GM13976 (cell line): ENCODE measurements at regions of chr11 and their contacts with region 1.

Region 1: GRCh38 chr11:64894070-64894796 is 15.8 kb upstream of the EHD1 start:
- DNase-seq: peak; percentile 94
- CTCF ChIP-seq: peak; percentile 97

Region 2: GRCh38 chr11:64396079-64396591 is 498.1 kb before region 1 on chr11:
- in situ Hi-C with region 1: no loop called
- DNase-seq: no peak
- CTCF ChIP-seq: no peak

Region 3: DNA sequence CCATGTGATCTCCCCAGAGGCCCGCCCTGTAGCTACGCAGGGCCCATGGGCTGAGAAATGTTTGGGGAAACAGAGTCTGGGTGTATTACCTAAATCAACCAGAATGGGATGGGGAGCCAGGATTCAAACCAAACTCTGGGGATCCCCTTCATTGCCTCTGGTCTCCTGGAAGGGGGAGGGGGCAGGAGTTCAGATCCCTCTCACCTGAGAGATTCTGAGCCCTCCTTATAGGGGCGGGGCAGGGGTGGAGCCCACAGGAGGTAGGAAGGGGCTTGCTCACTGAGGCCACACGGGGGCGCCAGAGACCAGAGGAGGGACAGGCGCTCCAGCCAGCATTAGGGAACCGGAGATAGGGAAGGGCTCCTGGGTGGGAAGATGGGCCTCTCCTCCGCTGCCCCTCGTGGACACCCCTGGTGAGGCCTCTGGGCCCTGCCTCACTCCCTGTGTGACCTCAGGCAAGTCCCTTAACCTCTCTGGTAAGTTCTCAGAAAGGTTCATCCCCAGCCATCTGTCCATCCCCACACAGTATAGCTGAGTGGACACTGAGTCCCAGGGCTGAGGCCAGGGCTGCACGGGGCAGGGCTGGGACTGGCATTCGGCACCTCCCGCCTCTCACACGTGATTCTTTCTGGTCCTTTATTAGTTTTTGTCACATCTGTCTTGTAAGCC is 47.1 kb before region 1 on chr11:
- in situ Hi-C with region 1: loop called (anchors 5 kb)
- DNase-seq: peak; percentile 90
- CTCF ChIP-seq: peak; percentile 95